Aorta (tissue), 5 donors: ENCODE measurements at regions of chr3 and their contacts with region 1.

Region 1: GRCh38 chr3:61877348-61878138 is 316.2 kb downstream of the PTPRG start:
- DNase-seq: no peak
- ATAC-seq: no peak
- H3K4me3 ChIP-seq: no peak overlapping the region
- H3K27ac ChIP-seq: no peak overlapping the region
- H3K4me1 ChIP-seq: peaks cover 4 to 19% of the 10 kb centered on the region in 2 donors
- H3K27me3 ChIP-seq: no peaks in the 10 kb centered on the region

Region 2: DNA sequence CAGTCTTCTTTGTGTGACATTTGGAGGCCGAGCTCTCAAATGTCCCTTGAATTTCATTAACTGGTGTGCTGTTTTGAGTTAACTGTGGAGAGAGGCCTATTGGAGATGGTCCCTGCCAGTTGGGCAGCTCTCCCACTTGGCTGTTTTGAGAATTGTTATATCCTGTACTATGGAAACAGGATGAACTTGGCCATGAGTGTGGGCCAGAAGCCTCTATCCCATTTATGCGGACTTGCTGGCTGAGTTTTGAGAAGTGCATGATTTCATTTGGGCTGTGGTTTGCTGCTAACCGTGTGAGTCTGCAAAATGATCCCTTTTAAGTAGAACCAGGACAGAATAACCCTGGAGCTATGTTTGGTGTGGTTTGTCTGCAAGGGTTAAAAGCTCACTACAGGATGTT is 49.8 kb after region 1 on chr3:
- intact Hi-C with region 1: loop called in 1 of 2 experiments (anchors 10 kb)
- DNase-seq: peak; percentile 87
- ATAC-seq: peak; percentile 83
- H3K4me3 ChIP-seq: no peak overlapping the region
- H3K27ac ChIP-seq: peak overlapping the region; percentile 33 to 88
- H3K4me1 ChIP-seq: peaks cover 11 to 19% of the 10 kb centered on the region in 2 donors
- H3K27me3 ChIP-seq: no peaks in the 10 kb centered on the region

Region 3: DNA sequence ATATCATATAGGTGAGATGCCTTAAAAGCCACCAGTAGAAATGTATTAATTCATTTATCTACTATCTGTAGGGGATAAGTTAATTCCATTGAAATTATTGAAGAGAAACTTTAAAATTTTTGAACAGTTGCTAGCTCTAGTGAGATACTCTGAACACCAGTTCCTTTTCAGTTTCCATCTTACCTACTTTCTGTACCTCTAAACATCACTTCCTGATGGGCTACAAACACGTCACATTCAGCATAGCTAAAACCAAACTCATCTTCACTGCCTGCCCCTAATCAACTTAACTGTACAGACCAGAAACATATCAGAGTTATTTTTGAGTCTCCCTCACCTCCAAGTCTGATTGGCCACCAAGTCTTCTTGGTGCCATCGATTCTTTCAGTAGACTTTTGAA is 406.9 kb after region 1 on chr3:
- intact Hi-C with region 1: no loop called
- DNase-seq: no peak
- ATAC-seq: no peak
- H3K4me3 ChIP-seq: no peak overlapping the region
- H3K27ac ChIP-seq: no peak overlapping the region
- H3K4me1 ChIP-seq: no peaks in the 10 kb centered on the region
- H3K27me3 ChIP-seq: no peaks in the 10 kb centered on the region